ENCODE measurements at regions of chr2 and their contacts with region 1.

Region 1: GRCh38 chr2:11477994-11478393 is 12.0 kb upstream of the E2F6 start:
- DNase-seq: peak; percentile 64
- H3K4me3 ChIP-seq: no peak overlapping the region
- H3K27ac ChIP-seq: no peak overlapping the region
- H3K4me1 ChIP-seq: peaks cover 5% of the 10 kb centered on the region
- H3K27me3 ChIP-seq: peaks cover 10% of the 10 kb centered on the region
- CTCF ChIP-seq: peak; percentile 73 to 87

Region 2: DNA sequence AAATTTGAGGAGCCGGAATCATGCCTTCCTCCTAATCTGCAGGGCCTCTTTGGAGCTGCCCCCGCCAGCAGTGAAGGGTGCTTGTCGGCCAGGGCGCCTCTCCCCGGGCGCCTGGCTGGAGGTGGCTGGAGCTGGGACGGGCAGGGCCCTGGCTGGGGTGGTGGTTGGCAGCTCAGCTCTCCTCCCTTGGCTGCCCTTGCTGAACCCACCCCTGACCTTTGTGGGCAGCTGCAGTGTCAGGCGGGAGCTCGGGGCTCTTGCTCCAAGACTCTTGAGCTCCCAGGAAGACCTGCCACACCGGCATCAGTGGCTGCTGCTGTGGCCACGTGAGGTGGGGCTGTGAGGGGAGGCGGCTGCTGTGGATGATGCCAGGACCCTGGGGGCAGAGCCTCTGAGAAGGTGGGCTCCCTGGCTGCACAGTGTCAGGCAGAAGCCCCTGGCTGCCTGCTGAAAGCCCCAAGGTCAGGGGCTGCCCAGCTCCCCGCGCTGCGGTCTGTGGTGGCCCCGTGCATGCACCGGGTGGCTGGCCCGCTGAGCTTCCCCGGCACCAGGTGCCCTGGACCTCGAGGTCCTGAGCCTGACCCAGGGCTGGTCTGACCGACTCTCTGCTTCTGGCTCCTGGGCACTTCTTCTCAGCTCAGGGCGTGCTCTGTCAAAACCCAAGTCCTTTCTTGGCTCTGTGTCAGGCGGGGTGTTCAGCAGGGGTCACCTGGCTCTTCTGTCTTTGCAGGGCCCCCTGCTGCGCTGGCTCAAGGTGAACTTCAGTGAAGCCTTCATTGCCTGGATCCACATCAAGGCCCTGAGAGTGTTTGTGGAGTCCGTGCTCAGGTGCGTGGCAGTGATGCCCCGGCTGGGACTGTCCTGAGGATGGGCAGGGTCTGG is 699.9 kb before region 1 on chr2:
- CTCF ChIA-PET with region 1: no interaction called
- dilution Hi-C with region 1: no loop called
- in situ Hi-C with region 1: no loop called
- intact Hi-C with region 1: no loop called
- DNase-seq: no peak
- H3K4me3 ChIP-seq: no peak overlapping the region
- H3K27ac ChIP-seq: no peak overlapping the region
- H3K4me1 ChIP-seq: peaks cover 18% of the 10 kb centered on the region
- H3K27me3 ChIP-seq: no peaks in the 10 kb centered on the region
- CTCF ChIP-seq: no peak

Region 3: DNA sequence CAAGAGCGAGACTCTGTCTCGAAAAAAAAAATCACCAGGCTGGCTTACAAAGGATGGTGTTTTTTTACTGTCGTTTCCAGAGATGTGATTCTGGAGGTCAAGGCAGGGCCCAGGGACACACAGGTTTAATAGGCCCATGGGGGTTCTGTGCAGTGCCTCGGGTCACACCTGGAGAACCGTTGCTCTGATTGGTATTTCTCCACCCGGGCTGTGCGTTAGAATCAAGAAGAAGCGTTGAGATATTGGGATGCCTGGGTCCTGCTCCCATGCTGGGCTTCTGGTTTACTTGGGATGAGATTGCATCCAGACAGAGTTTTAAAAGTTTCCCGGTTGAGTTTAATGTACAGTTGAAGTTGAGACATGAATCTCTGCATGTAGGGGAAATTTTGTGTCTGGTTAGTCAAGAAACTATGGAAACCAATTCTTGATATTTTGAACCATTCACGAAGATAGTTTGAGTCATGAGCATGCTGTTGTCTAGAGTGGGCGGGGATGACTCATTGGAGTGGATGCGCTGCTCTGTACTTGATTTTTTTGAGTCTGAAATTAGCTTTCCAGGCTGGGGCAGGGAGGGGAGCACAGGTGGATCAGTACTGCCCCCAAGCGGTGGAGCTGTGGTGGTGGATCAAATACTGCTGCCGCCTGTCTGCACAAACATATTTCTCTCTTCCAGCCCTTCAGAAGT is 106.0 kb after region 1 on chr2:
- CTCF ChIA-PET with region 1: interaction called, 8 read pairs
- dilution Hi-C with region 1: no loop called
- in situ Hi-C with region 1: loop called (anchors 5 kb)
- intact Hi-C with region 1: loop called (anchors 1 kb)
- DNase-seq: peak; percentile 95
- H3K4me3 ChIP-seq: no peak overlapping the region
- H3K27ac ChIP-seq: peak overlapping the region; percentile 30
- H3K4me1 ChIP-seq: peaks cover 4% of the 10 kb centered on the region
- H3K27me3 ChIP-seq: no peaks in the 10 kb centered on the region
- CTCF ChIP-seq: peak; percentile 78 to 92

Region 4: GRCh38 chr2:11610624-11611242 is 132.7 kb after region 1 on chr2:
- CTCF ChIA-PET with region 1: no interaction called
- dilution Hi-C with region 1: loop called (anchors 5 kb)
- in situ Hi-C with region 1: no loop called
- intact Hi-C with region 1: no loop called
- DNase-seq: no peak
- H3K4me3 ChIP-seq: no peak overlapping the region
- H3K27ac ChIP-seq: no peak overlapping the region
- H3K4me1 ChIP-seq: peaks cover 6% of the 10 kb centered on the region
- H3K27me3 ChIP-seq: peaks cover 2% of the 10 kb centered on the region
- CTCF ChIP-seq: no peak

Region 5: DNA sequence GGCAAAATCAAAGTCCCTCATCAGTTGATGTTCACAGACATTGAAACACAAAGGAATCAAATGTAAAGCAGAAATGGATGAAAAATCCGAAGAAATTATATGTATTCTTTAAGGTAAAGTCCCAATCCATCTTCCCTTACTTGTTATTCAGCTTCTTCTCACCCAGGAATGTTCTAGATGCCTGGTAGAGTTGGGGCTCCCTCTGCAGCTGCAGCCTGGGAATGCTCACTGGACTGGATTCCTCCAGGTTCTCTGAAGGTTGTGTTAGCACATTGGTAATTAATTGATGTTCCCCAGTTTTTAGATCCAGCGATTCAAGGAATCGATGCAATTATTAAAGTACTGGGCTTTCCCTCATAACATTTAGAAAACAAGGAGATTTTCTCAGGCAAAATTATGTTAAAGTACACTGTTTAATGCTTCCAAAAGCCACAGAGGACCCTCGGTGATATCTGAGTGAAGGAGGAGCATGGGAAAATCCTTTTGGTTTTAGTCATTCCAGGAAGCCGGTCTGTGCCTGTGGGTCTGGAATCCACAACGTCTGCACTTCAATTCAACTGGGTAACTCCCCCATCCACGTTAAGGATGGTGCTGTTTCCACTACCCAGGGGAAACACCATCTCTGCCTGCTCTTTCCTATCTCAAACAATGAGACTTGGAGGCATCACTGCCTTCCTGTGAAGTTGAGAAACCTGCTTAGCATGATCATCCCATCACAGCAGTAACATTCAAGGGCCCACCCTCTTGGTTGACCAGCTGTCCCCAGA is 170.0 kb after region 1 on chr2:
- CTCF ChIA-PET with region 1: no interaction called
- dilution Hi-C with region 1: no loop called
- in situ Hi-C with region 1: no loop called
- intact Hi-C with region 1: loop called (anchors 1 kb)
- DNase-seq: peak; percentile 12
- H3K4me3 ChIP-seq: no peak overlapping the region
- H3K27ac ChIP-seq: no peak overlapping the region
- H3K4me1 ChIP-seq: no peaks in the 10 kb centered on the region
- H3K27me3 ChIP-seq: peaks cover 2% of the 10 kb centered on the region
- CTCF ChIP-seq: peak; percentile 53 to 84

Region 6: DNA sequence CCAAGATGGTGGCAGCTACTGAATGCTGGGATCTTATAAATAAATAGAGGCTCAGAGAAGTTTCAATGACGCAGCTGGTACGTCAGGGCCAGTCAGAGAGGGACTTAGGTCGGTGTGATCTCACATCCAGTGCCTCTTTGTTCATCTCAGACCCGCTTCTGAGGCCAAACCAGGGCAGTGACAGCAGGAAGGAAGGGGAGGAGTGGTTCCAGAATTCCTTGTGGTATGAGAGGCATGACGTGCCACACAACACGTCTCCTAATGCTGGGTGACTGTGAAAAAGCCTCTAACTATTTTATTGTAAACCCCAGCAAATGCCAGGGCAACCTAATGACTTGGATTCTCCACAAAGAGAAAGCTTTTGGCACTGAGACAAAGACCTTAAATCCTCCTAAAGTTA is 691.7 kb after region 1 on chr2:
- CTCF ChIA-PET with region 1: no interaction called
- dilution Hi-C with region 1: no loop called
- in situ Hi-C with region 1: no loop called
- intact Hi-C with region 1: no loop called
- DNase-seq: peak; percentile 12
- H3K4me3 ChIP-seq: no peak overlapping the region
- H3K27ac ChIP-seq: no peak overlapping the region
- H3K4me1 ChIP-seq: peaks cover 6% of the 10 kb centered on the region
- H3K27me3 ChIP-seq: no peaks in the 10 kb centered on the region
- CTCF ChIP-seq: no peak

Measured in mammary epithelial cell (primary cell).